Transverse colon (tissue), 4 donors: ENCODE measurements at regions of chrX and their contacts with region 1.

Region 1: DNA sequence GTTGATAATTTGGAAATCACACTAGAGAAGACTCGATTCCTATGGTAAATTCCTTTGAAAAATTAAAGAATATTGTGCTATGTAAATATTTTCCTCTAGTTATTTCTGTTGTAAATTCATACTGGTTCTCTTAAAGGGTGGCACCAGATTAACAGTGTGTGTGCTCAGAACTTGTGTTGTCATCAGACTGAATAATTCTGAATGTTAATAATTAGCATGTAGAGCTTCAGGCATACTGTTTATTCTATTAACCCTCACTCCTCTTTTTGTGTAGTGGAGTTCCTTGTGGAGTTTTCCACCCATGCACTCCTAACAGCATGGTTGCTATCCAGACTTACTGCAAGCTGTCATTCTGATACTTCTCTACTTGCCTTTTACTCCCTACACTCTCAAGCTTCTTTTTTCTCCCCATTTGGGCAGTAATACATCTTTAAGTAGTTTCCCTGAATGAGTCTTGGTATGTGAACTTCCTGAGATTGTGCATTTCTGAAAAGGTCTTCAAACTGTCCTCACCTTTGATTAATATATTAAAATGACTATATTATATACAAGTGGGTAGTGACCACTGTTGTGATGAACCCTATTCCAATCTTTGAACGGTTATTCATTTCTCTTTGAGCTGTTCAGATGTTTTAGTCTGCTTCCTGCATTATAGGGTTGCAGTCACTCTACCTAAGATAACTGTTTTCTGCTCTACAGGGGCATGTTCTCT is 29.9 kb upstream of the RTL8A start:
- DNase-seq: no peak
- H3K4me3 ChIP-seq: no peak overlapping the region
- H3K27ac ChIP-seq: no peak overlapping the region
- H3K4me1 ChIP-seq: no peaks in the 10 kb centered on the region
- H3K27me3 ChIP-seq: no peaks in the 10 kb centered on the region
- CTCF ChIP-seq: no peak
- EP300 ChIP-seq: no peak
- POLR2A ChIP-seq: no peak

Region 2: DNA sequence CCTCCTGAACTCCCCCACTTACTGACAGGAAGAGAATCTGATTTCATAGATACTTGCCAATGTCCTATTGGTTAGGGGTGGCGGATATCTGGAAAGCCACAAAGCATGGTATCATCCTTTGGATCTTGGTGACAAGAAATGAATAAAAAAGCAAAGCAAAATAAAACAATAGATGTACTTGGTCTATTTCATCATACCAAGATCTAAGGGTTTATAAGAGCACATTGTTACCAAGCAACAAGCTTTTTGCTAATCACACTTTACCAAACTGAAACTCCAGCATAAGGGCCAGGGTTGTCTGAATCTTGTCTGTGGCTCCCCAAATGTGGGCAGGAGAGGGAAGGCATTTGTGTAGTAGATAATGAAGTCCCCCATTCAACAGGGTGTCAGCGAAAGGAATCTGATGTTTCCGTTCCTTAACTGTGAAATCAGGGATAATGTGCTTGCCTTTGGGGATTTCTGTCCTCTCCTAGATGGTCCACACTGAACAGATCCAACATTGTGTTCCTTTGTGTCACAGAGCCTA is 216.1 kb before region 1 on chrX:
- in situ Hi-C with region 1: no loop called
- intact Hi-C with region 1: no loop called
- DNase-seq: no peak
- H3K4me3 ChIP-seq: no peak overlapping the region
- H3K27ac ChIP-seq: no peak overlapping the region
- H3K4me1 ChIP-seq: no peaks in the 10 kb centered on the region
- H3K27me3 ChIP-seq: no peaks in the 10 kb centered on the region
- CTCF ChIP-seq: no peak
- EP300 ChIP-seq: no peak
- POLR2A ChIP-seq: no peak

Region 3: DNA sequence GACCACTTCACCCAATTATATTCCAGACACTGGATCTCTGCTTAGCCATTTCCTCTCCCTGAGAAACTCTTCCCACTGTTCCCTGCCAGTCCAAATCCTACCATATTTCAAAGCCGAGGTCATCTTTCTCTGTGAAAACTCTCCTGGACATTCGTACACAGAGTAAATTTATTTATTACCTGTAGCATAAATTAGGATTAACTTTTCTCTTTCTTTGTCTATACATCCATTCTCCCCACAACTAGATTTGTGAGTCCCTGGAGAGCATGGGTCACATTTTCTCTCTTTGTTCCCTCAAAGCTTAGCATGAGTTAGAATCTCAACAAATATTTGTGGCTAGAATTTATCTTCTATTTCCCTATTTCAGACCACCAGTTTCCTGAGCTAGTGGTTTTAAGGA is 118.8 kb before region 1 on chrX:
- in situ Hi-C with region 1: no loop called
- intact Hi-C with region 1: loop called (anchors 5 kb)
- DNase-seq: no peak
- H3K4me3 ChIP-seq: no peak overlapping the region
- H3K27ac ChIP-seq: no peak overlapping the region
- H3K4me1 ChIP-seq: no peaks in the 10 kb centered on the region
- H3K27me3 ChIP-seq: no peaks in the 10 kb centered on the region
- CTCF ChIP-seq: no peak
- EP300 ChIP-seq: no peak
- POLR2A ChIP-seq: no peak